ENCODE measurements at regions of chr6 and their contacts with region 1.

Region 1: GRCh38 chr6:10528170-10528981 is 7.2 kb downstream of the GCNT2 start:
- DNase-seq: peak; percentile 67
- ATAC-seq: peak; percentile 48
- H3K4me3 ChIP-seq: peak overlapping the region; percentile 63 to 86 (median 73)
- H3K4me3 Mint-ChIP-seq: peak overlapping the region; percentile 92
- H3K27ac ChIP-seq: peak overlapping the region; percentile 70 to 83
- H3K27ac Mint-ChIP-seq: peak overlapping the region; percentile 87
- H3K4me1 ChIP-seq: peaks cover 36 to 58% of the 10 kb centered on the region in 2 donors
- H3K4me1 Mint-ChIP-seq: peaks cover 57% of the 10 kb centered on the region
- H3K27me3 ChIP-seq: no peaks in the 10 kb centered on the region
- H3K27me3 Mint-ChIP-seq: no peaks in the 10 kb centered on the region
- CTCF ChIP-seq: no peak

Region 2: DNA sequence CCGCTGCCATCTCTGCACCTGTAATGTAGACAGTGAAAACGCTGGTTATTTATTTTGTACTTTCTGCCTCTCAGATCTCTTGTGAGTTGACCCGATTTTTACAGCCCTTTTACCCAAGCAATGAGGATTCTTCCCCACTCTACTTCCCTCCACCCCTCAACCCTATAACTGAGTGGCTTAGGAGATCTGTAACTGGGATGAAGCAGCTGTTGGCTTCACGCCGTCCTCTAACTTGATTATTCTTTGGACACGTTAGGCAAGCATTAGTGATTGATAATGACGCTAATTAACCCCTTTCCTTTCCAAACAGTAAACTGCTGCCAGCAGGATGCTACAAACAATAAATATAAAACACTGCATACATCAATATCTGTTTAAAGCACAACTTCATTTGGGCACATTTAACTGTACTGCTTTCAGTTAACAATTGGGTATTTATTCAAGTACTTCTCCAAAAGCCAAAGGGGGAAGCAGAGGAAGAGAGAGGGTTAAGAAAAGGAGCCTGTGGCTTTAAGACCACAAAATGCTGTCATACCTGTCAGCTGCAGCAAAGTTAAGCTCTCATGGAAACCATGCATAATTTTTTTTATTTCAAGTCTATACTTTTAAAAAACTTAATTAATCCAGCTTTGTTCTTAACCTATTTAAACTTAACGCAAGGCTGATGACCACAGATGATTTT is 134.7 kb before region 1 on chr6:
- CTCF ChIA-PET with region 1: no interaction called
- POLR2A ChIA-PET with region 1: no interaction called
- intact Hi-C with region 1: no loop called
- DNase-seq: no peak
- ATAC-seq: no peak
- H3K4me3 ChIP-seq: no peak overlapping the region
- H3K4me3 Mint-ChIP-seq: no peak overlapping the region
- H3K27ac ChIP-seq: no peak overlapping the region
- H3K27ac Mint-ChIP-seq: no peak overlapping the region
- H3K4me1 ChIP-seq: peaks cover 0 to 6% of the 10 kb centered on the region in 2 donors
- H3K4me1 Mint-ChIP-seq: no peaks in the 10 kb centered on the region
- H3K27me3 ChIP-seq: peaks cover 3 to 88% (median 68%) of the 10 kb centered on the region in 4 experiments
- H3K27me3 Mint-ChIP-seq: peaks cover 87% of the 10 kb centered on the region
- CTCF ChIP-seq: no peak

Region 3: GRCh38 chr6:10478187-10479040 is 50.0 kb before region 1 on chr6:
- CTCF ChIA-PET with region 1: no interaction called
- POLR2A ChIA-PET with region 1: no interaction called
- intact Hi-C with region 1: no loop called
- DNase-seq: peak; percentile 60
- ATAC-seq: peak; percentile 21
- H3K4me3 ChIP-seq: no peak overlapping the region
- H3K4me3 Mint-ChIP-seq: no peak overlapping the region
- H3K27ac ChIP-seq: no peak overlapping the region
- H3K27ac Mint-ChIP-seq: no peak overlapping the region
- H3K4me1 ChIP-seq: no peaks in the 10 kb centered on the region
- H3K4me1 Mint-ChIP-seq: no peaks in the 10 kb centered on the region
- H3K27me3 ChIP-seq: no peaks in the 10 kb centered on the region
- H3K27me3 Mint-ChIP-seq: peaks cover 30% of the 10 kb centered on the region
- CTCF ChIP-seq: peak; percentile 80

Region 4: DNA sequence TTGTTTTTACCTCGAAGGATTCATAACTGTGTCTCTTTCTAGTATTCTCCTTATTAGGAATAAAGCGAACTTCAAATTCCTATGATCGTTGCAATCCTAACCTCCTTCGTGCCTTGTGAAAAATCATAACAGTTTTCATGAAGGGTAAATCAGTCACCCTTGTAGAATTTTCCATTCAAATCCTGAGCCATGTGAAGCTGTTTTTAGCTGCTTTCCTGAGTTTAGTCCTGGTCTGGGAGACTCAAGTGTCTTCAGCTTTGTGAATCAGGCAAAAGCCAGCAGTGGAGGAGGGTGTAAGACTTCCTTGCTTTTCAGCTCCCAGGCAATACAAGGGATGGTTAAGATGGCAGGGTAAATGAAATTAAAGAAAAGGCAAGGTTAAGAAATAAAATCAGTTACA is 17.1 kb after region 1 on chr6:
- CTCF ChIA-PET with region 1: no interaction called
- POLR2A ChIA-PET with region 1: interaction called, 10 read pairs
- intact Hi-C with region 1: no loop called
- DNase-seq: no peak
- ATAC-seq: no peak
- H3K4me3 ChIP-seq: no peak overlapping the region
- H3K4me3 Mint-ChIP-seq: no peak overlapping the region
- H3K27ac ChIP-seq: no peak overlapping the region
- H3K27ac Mint-ChIP-seq: peak overlapping the region; percentile 17
- H3K4me1 ChIP-seq: peaks cover 7 to 11% of the 10 kb centered on the region in 2 donors
- H3K4me1 Mint-ChIP-seq: peaks cover 41% of the 10 kb centered on the region
- H3K27me3 ChIP-seq: no peaks in the 10 kb centered on the region
- H3K27me3 Mint-ChIP-seq: no peaks in the 10 kb centered on the region
- CTCF ChIP-seq: no peak

Region 5: DNA sequence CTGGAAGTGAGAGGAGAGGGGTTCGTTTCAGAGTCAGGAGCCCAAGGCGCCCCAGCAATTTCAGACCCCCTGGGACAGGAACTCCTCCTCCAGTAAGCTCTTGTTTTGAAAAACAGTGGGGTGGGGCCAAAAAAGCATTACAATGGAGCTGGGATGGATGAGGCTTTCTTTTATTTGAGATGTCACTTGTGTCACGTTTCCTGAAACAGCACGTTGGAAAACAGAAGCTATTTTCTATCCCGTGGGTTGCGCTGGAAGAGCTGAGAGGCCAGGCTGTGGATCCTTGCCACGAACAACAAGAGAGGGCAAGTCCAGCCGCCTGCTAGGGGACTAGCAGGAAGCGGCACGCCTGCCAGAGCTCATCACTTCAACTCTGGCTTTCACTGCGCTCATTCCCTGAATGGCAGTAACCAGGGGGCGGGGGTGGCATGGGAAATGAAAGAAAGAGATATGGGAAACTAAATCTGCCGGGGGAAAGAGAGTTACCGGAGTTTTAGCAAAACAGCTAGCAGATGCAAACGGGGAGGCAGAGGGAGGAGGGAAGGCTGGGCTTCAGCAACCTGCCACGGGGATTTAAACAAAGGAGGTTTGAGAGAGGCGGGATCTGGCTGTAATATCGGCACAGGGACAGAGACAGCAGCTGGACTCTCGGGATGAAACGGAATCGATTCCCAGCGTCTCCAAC is 27.4 kb after region 1 on chr6:
- CTCF ChIA-PET with region 1: no interaction called
- POLR2A ChIA-PET with region 1: no interaction called
- intact Hi-C with region 1: loop called (anchors 5 kb)
- DNase-seq: no peak
- ATAC-seq: no peak
- H3K4me3 ChIP-seq: no peak overlapping the region
- H3K4me3 Mint-ChIP-seq: no peak overlapping the region
- H3K27ac ChIP-seq: no peak overlapping the region
- H3K27ac Mint-ChIP-seq: no peak overlapping the region
- H3K4me1 ChIP-seq: peaks cover 10 to 15% of the 10 kb centered on the region in 2 donors
- H3K4me1 Mint-ChIP-seq: peaks cover 56% of the 10 kb centered on the region
- H3K27me3 ChIP-seq: no peaks in the 10 kb centered on the region
- H3K27me3 Mint-ChIP-seq: no peaks in the 10 kb centered on the region
- CTCF ChIP-seq: no peak

Region 6: GRCh38 chr6:10578723-10579122 is 50.3 kb after region 1 on chr6:
- CTCF ChIA-PET with region 1: no interaction called
- POLR2A ChIA-PET with region 1: no interaction called
- intact Hi-C with region 1: no loop called
- DNase-seq: no peak
- ATAC-seq: no peak
- H3K4me3 ChIP-seq: no peak overlapping the region
- H3K4me3 Mint-ChIP-seq: no peak overlapping the region
- H3K27ac ChIP-seq: no peak overlapping the region
- H3K27ac Mint-ChIP-seq: no peak overlapping the region
- H3K4me1 ChIP-seq: no peaks in the 10 kb centered on the region
- H3K4me1 Mint-ChIP-seq: peaks cover 13% of the 10 kb centered on the region
- H3K27me3 ChIP-seq: no peaks in the 10 kb centered on the region
- H3K27me3 Mint-ChIP-seq: no peaks in the 10 kb centered on the region
- CTCF ChIP-seq: no peak

Region 7: DNA sequence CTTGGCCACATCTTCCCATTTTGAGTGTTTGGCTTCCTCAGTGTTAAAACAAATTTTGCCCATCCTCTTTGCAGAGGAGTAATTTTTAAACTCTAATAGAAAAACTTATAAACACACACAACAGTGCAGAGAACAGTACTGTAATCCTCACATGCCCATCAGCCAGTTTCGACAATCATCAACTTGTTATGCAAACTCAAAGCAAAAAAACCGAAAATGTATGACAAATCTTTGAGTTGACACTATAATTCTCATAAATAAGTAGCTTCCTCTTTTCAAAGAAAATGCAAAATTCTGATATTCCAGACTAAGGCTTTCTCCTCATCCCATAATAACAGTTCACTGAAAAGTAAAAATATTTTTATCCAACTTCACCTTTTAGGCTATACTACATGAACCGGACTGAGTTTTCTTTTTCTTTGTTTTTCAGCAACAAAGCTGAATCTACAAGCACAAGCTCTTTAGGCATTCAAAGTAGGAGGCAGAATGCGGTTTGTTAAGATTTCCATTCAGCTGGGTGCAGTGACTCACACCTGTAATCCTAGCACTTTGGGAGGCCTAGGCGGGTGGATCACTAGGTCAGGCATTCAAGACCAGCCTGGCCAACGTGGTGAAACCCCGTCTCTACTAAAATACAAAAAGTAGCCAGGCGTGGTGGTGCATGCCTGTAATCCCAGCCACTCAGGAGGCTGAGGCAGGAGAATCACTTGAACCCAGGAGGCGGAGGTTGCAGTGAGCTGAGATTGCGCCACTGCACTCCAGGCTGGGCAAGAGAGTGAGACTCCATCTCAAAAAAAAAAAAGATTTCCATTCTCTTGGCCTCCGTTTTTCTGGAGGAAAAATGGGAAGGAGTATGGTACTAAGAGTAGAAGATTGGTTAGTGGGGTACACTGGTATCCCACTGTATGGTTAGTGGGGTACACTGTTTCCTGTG is 67.6 kb after region 1 on chr6:
- CTCF ChIA-PET with region 1: no interaction called
- POLR2A ChIA-PET with region 1: interaction called, 8 read pairs
- intact Hi-C with region 1: loop called (anchors 5 kb)
- DNase-seq: no peak
- ATAC-seq: peak; percentile 21
- H3K4me3 ChIP-seq: no peak overlapping the region
- H3K4me3 Mint-ChIP-seq: no peak overlapping the region
- H3K27ac ChIP-seq: no peak overlapping the region
- H3K27ac Mint-ChIP-seq: no peak overlapping the region
- H3K4me1 ChIP-seq: peaks cover 8 to 10% of the 10 kb centered on the region in 2 donors
- H3K4me1 Mint-ChIP-seq: peaks cover 58% of the 10 kb centered on the region
- H3K27me3 ChIP-seq: no peaks in the 10 kb centered on the region
- H3K27me3 Mint-ChIP-seq: no peaks in the 10 kb centered on the region
- CTCF ChIP-seq: no peak

Region 8: GRCh38 chr6:11439017-11439420 is 910.6 kb after region 1 on chr6:
- CTCF ChIA-PET with region 1: no interaction called
- POLR2A ChIA-PET with region 1: interaction called, 10 read pairs
- intact Hi-C with region 1: no loop called
- DNase-seq: no peak
- ATAC-seq: no peak
- H3K4me3 ChIP-seq: no peak overlapping the region
- H3K4me3 Mint-ChIP-seq: no peak overlapping the region
- H3K27ac ChIP-seq: no peak overlapping the region
- H3K27ac Mint-ChIP-seq: no peak overlapping the region
- H3K4me1 ChIP-seq: peaks cover 25 to 29% of the 10 kb centered on the region in 2 donors
- H3K4me1 Mint-ChIP-seq: peaks cover 29% of the 10 kb centered on the region
- H3K27me3 ChIP-seq: no peaks in the 10 kb centered on the region
- H3K27me3 Mint-ChIP-seq: no peaks in the 10 kb centered on the region
- CTCF ChIP-seq: no peak

Measured in B cell (primary cell).